MCF 10A (cell line): ENCODE measurements at regions of chr1 and their contacts with region 1.

Region 1: GRCh38 chr1:162391790-162392563 is 10.4 kb downstream of the C1orf226 start:
- DNase-seq: peak; percentile 72
- H3K4me3 Mint-ChIP-seq: no peak overlapping the region
- H3K27ac Mint-ChIP-seq: no peak overlapping the region
- H3K4me1 Mint-ChIP-seq: peaks cover 37% of the 10 kb centered on the region
- H3K27me3 Mint-ChIP-seq: peaks cover 13% of the 10 kb centered on the region
- CTCF ChIP-seq: peak; percentile 93

Region 2: DNA sequence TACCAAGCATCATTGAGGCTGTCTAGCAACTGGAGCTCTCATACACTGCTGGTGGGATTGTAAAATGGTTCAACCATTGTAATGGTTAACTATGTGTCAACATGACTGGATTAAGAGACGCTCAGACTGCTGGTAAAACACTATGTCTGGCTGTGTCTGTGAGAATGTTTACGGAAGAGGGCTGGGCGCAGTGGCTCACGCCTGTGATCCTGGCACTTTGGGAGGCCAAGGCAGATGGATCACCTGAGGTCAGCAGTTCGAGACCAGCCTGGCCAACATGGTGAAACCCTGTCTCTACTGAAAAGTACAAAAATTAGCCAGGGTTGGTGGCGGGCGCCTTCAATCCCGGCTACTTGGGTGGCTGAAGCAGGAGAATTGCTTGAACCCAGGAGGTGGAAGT is 689.7 kb before region 1 on chr1:
- CTCF ChIA-PET with region 1: no interaction called
- POLR2A ChIA-PET with region 1: no interaction called
- intact Hi-C with region 1: no loop called
- DNase-seq: no peak
- H3K4me3 Mint-ChIP-seq: no peak overlapping the region
- H3K27ac Mint-ChIP-seq: no peak overlapping the region
- H3K4me1 Mint-ChIP-seq: no peaks in the 10 kb centered on the region
- H3K27me3 Mint-ChIP-seq: no peaks in the 10 kb centered on the region
- CTCF ChIP-seq: no peak

Region 3: DNA sequence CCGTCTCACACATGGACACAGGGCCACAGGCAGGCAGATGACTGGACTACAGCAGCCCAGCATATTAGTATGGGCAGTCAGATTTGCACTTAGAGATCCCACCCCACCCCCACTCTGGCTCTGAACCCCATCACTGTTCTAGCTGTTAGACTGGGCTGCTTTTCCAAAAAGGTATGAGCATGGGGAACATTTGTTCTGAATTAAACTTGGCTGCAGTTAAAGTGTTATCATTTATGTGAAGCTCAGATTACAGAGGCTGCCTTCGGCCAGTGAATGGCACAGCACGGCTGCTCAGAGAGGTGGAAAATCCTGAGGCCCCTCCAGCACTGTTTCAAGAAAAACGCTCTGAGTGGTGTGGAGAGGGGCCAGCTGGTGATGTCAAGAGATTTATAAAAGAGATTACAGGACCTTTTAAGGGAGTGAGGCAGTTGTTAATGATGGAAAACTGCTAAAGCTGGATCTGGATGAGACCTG is 329.4 kb before region 1 on chr1:
- CTCF ChIA-PET with region 1: interaction called, 33 read pairs
- POLR2A ChIA-PET with region 1: interaction called, 3 read pairs
- intact Hi-C with region 1: no loop called
- DNase-seq: no peak
- H3K4me3 Mint-ChIP-seq: no peak overlapping the region
- H3K27ac Mint-ChIP-seq: no peak overlapping the region
- H3K4me1 Mint-ChIP-seq: peaks cover 6% of the 10 kb centered on the region
- H3K27me3 Mint-ChIP-seq: no peaks in the 10 kb centered on the region
- CTCF ChIP-seq: no peak

Region 4: GRCh38 chr1:162256287-162256686 is 135.7 kb before region 1 on chr1:
- CTCF ChIA-PET with region 1: interaction called, 12 read pairs
- POLR2A ChIA-PET with region 1: no interaction called
- intact Hi-C with region 1: no loop called
- DNase-seq: no peak
- H3K4me3 Mint-ChIP-seq: no peak overlapping the region
- H3K27ac Mint-ChIP-seq: no peak overlapping the region
- H3K4me1 Mint-ChIP-seq: no peaks in the 10 kb centered on the region
- H3K27me3 Mint-ChIP-seq: peaks cover 2% of the 10 kb centered on the region
- CTCF ChIP-seq: no peak

Region 5: GRCh38 chr1:162291000-162291399 is 101.0 kb before region 1 on chr1:
- CTCF ChIA-PET with region 1: interaction called, 21 read pairs
- POLR2A ChIA-PET with region 1: interaction called, 4 read pairs
- intact Hi-C with region 1: no loop called
- DNase-seq: no peak
- H3K4me3 Mint-ChIP-seq: no peak overlapping the region
- H3K27ac Mint-ChIP-seq: no peak overlapping the region
- H3K4me1 Mint-ChIP-seq: peaks cover 13% of the 10 kb centered on the region
- H3K27me3 Mint-ChIP-seq: no peaks in the 10 kb centered on the region
- CTCF ChIP-seq: no peak

Region 6: GRCh38 chr1:162357681-162358266 is 34.2 kb before region 1 on chr1:
- CTCF ChIA-PET with region 1: interaction called, 67 read pairs
- POLR2A ChIA-PET with region 1: interaction called, 4 read pairs
- intact Hi-C with region 1: loop called (anchors 1 kb)
- DNase-seq: peak; percentile 80
- H3K4me3 Mint-ChIP-seq: no peak overlapping the region
- H3K27ac Mint-ChIP-seq: no peak overlapping the region
- H3K4me1 Mint-ChIP-seq: peaks cover 8% of the 10 kb centered on the region
- H3K27me3 Mint-ChIP-seq: no peaks in the 10 kb centered on the region
- CTCF ChIP-seq: peak; percentile 83

Region 7: DNA sequence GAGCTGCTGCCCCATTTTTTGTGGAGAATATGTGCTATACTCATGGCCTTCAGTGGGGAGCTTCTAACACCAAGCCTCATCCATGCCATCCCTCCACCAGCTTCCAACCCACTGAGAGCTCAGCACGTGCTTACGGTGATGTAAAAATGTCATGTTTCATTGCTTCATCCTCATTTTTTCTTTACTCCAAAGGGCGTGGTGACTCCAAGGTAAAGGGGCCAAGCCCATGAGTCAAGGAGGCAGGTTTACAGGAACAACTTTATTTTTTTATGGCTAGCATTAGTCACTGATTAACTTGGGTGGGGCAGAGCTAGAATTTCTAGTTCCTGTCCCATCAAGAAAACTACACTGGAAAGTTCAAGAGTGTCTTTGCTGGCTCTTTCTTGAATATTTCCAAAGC is 10.6 kb before region 1 on chr1 and contains the start of gene C1orf226:
- CTCF ChIA-PET with region 1: interaction called, 72 read pairs
- POLR2A ChIA-PET with region 1: interaction called, 26 read pairs
- intact Hi-C with region 1: no loop called
- DNase-seq: peak; percentile 95
- H3K4me3 Mint-ChIP-seq: peak within 1 kb of the TSS; percentile 26
- H3K27ac Mint-ChIP-seq: peak within 1 kb of the TSS; percentile 89
- H3K4me1 Mint-ChIP-seq: peaks cover 50% of the 10 kb centered on the region
- H3K27me3 Mint-ChIP-seq: no peaks in the 10 kb centered on the region
- CTCF ChIP-seq: no peak
- total RNA-seq, gene C1orf226: 3.1 and 3.3 TPM in 2 replicates